ENCODE measurements at regions of chr11 and their contacts with region 1.

Region 1: DNA sequence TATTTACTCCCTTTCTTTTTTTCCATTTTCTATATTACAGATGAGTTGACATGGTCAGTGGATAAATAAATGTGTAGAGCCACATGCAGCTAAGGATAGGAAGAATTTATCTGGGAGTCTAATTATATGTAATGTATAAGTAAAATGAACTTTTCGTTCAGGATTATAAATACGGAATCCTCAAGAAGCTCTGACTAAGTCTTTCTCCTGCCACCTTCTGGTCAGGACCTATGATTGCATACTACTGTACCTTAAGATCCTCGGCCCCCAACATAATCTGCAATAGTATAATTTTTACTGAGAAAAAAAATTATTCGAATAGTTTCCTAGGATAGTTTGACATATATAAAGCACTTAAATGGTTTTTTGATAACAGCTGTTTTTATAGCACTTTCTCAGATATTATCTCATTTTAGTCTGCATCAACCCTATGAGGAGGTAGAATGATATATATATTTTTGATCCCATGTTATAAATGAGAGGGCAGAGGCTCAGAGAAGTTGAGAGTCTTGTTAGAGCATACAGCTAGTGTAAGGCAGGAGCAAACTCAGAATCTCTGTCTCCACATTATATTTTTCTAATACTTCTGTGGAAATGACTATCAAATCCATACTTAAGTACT is 36.1 kb downstream of the CCDC90B start:
- DNase-seq: peak in 10 of 35 experiments; percentile 1 to 68 (median 4)
- ATAC-seq: peak; percentile 50 to 70 (median 70)
- H3K4me3 ChIP-seq: no peak overlapping the region
- H3K4me3 Mint-ChIP-seq: no peak overlapping the region
- H3K27ac ChIP-seq: no peak overlapping the region
- H3K27ac Mint-ChIP-seq: no peak overlapping the region
- H3K4me1 ChIP-seq: no peaks in the 10 kb centered on the region
- H3K4me1 Mint-ChIP-seq: peaks cover 0 to 4% (median 1%) of the 10 kb centered on the region in 3 donors
- H3K27me3 ChIP-seq: no peaks in the 10 kb centered on the region
- H3K27me3 Mint-ChIP-seq: no peaks in the 10 kb centered on the region

Region 2: GRCh38 chr11:82867495-82868082 is 382.5 kb before region 1 on chr11:
- CTCF ChIA-PET with region 1: interaction called, 32 to 36 read pairs
- POLR2A ChIA-PET with region 1: interaction called in 1 of 2 experiments, 5 read pairs
- DNase-seq: peak; percentile 27 to 87 (median 65)
- ATAC-seq: peak; percentile 30 to 60 (median 46)
- H3K4me3 ChIP-seq: no peak overlapping the region
- H3K4me3 Mint-ChIP-seq: peak overlapping the region in 2 of 3 donors; percentile 5 to 39
- H3K27ac ChIP-seq: no peak overlapping the region
- H3K27ac Mint-ChIP-seq: no peak overlapping the region
- H3K4me1 ChIP-seq: peaks cover 0 to 5% of the 10 kb centered on the region in 2 experiments
- H3K4me1 Mint-ChIP-seq: peaks cover 11 to 15% (median 14%) of the 10 kb centered on the region in 3 donors
- H3K27me3 ChIP-seq: no peaks in the 10 kb centered on the region
- H3K27me3 Mint-ChIP-seq: no peaks in the 10 kb centered on the region

Region 3: DNA sequence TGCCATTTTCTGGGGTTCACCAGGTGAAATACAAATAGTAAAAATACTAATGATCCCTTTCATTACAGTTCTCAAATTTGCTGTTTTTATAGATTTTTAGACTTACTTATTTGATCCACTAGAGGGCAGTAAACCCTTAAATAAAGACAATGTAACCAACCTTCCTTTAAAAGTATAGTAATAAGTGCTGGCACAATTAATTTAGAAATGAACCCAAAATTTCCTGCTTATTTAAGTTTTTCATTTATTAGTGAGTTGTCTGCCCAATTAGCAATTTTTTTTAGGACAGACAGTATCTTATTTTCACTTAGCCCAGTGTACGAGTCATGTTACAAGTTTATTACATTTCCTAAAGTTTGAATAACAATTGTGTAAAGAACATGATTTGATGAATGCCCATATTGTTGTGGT is 343.8 kb before region 1 on chr11:
- CTCF ChIA-PET with region 1: interaction called, 3 to 27 read pairs
- POLR2A ChIA-PET with region 1: no interaction called
- DNase-seq: peak in 1 of 35 experiments; percentile 57
- ATAC-seq: no peak
- H3K4me3 ChIP-seq: no peak overlapping the region
- H3K4me3 Mint-ChIP-seq: no peak overlapping the region
- H3K27ac ChIP-seq: no peak overlapping the region
- H3K27ac Mint-ChIP-seq: peak overlapping the region in 1 of 2 donors; percentile 63
- H3K4me1 ChIP-seq: peaks cover 9 to 23% of the 10 kb centered on the region in 2 experiments
- H3K4me1 Mint-ChIP-seq: peaks cover 37 to 41% (median 39%) of the 10 kb centered on the region in 3 donors
- H3K27me3 ChIP-seq: no peaks in the 10 kb centered on the region
- H3K27me3 Mint-ChIP-seq: no peaks in the 10 kb centered on the region

Region 4: GRCh38 chr11:82988936-82989627 is 261.0 kb before region 1 on chr11:
- CTCF ChIA-PET with region 1: no interaction called
- POLR2A ChIA-PET with region 1: interaction called in 1 of 2 experiments, 20 read pairs
- DNase-seq: no peak
- ATAC-seq: peak in 1 of 4 experiments; percentile 12
- H3K4me3 ChIP-seq: no peak overlapping the region
- H3K4me3 Mint-ChIP-seq: no peak overlapping the region
- H3K27ac ChIP-seq: no peak overlapping the region
- H3K27ac Mint-ChIP-seq: peak overlapping the region in 1 of 2 donors; percentile 5
- H3K4me1 ChIP-seq: no peaks in the 10 kb centered on the region
- H3K4me1 Mint-ChIP-seq: peaks cover 15 to 36% (median 16%) of the 10 kb centered on the region in 3 donors
- H3K27me3 ChIP-seq: no peaks in the 10 kb centered on the region
- H3K27me3 Mint-ChIP-seq: no peaks in the 10 kb centered on the region

Region 5: DNA sequence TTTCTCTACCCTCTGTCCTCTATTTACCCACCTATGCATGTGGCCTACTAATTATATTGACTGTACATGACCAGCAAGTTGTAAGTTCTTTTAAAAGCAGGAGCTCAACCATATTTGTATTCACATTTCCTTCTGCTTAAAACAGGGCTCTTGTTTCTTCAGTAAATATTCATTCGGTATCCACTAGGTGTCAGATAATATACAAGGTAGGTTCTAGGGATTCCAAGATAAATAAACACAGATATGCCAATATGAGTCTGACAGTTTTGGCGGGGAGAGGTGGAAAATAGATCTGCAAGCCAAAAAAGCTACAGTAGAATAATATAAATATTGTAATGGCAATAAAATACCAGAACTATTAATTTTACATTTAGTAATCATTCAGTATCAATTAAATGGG is 163.0 kb before region 1 on chr11:
- CTCF ChIA-PET with region 1: interaction called, 7 to 11 read pairs
- POLR2A ChIA-PET with region 1: no interaction called
- DNase-seq: no peak
- ATAC-seq: no peak
- H3K4me3 ChIP-seq: no peak overlapping the region
- H3K4me3 Mint-ChIP-seq: no peak overlapping the region
- H3K27ac ChIP-seq: no peak overlapping the region
- H3K27ac Mint-ChIP-seq: peak overlapping the region in 1 of 2 donors; percentile 10
- H3K4me1 ChIP-seq: no peaks in the 10 kb centered on the region
- H3K4me1 Mint-ChIP-seq: peaks cover 21 to 28% (median 25%) of the 10 kb centered on the region in 3 donors
- H3K27me3 ChIP-seq: no peaks in the 10 kb centered on the region
- H3K27me3 Mint-ChIP-seq: no peaks in the 10 kb centered on the region

Region 6: DNA sequence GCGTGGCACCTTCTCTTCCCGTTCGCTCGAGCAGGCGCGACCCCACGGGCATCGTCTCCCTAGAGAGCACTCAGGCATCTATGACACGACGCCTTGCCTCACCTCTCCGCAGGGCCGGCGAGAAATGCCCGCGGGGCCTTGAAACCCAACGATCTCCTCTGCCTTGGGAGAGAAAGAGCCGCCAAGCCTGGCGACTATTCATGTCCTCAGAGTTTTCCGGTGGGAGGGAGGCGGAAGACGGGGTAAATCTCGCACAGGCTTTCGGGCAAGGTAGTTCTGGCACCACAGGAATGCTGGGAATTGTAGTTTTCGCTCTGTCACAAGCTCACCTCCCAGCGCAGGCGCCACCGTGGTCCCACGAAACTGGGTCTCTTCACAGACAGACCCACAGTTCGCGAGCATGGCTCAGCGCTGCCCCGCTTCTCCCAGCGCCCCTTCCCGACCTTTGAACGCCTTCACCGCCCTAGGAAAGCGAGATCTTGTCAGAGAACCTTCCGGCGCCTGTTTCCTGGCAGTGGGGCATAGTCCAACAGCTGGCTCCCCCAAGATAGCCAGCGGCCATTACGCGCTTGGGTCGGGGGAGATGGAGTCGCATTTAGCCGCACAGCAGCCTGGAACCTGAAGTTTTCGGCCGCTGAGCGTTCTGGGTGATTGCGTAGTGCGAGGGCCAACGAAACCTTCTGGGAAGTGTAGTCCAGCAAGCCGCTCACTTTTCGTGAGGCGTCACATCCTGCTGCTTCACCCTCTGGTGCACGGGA is 35.9 kb after region 1 on chr11 and contains the start of gene CCDC90B:
- CTCF ChIA-PET with region 1: interaction called in 1 of 2 experiments, 6 read pairs
- POLR2A ChIA-PET with region 1: interaction called in 1 of 2 experiments, 11 read pairs
- DNase-seq: peak; percentile 88 to 97 (median 93)
- ATAC-seq: peak; percentile 89 to 94 (median 92)
- H3K4me3 ChIP-seq: peak within 1 kb of the TSS; percentile 89 to 93
- H3K4me3 Mint-ChIP-seq: peak within 1 kb of the TSS; percentile 93 to 97 (median 95)
- H3K27ac ChIP-seq: peak within 1 kb of the TSS; percentile 94
- H3K27ac Mint-ChIP-seq: peak within 1 kb of the TSS; percentile 99 to 100
- H3K4me1 ChIP-seq: peaks cover 14 to 16% of the 10 kb centered on the region in 2 experiments
- H3K4me1 Mint-ChIP-seq: peaks cover 40 to 52% (median 46%) of the 10 kb centered on the region in 3 donors
- H3K27me3 ChIP-seq: no peaks in the 10 kb centered on the region
- H3K27me3 Mint-ChIP-seq: peaks cover 0 to 3% of the 10 kb centered on the region in 2 donors
- total RNA-seq, gene CCDC90B: 24.3 to 34.4 (median 30.8) TPM